ENCODE measurements at regions of chr7 and their contacts with region 1.

Region 1: DNA sequence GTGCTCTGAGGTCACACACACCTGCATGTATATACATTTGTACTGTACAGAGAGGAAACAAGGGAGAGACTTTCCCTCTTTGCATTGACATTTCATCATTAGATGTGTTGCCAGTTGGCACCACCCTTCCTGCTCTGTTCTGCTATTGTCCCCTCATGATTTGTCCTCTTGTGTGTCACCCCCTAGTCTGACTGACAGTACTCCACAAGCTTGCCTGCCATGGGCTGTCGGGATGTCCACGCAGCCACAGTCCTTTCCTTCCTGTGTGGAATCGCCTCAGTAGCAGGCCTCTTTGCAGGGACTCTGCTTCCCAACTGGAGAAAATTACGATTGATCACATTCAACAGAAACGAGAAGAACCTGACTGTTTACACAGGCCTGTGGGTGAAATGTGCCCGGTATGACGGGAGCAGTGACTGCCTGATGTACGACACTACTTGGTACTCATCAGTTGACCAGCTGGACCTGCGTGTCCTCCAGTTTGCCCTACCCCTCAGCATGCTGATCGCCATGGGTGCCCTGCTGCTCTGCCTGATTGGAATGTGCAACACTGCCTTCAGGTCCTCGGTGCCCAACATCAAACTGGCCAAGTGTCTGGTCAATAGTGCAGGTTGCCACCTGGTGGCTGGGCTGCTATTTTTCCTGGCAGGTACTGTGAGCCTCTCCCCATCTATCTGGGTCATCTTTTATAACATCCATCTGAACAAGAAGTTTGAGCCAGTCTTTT is 9.4 kb downstream of the CLDN12 start:
- DNase-seq: peak; percentile 63
- ATAC-seq: peak; percentile 62
- H3K4me3 ChIP-seq: no peak overlapping the region
- H3K27ac ChIP-seq: no peak overlapping the region
- H3K4me1 ChIP-seq: peaks cover 11% of the 10 kb centered on the region
- H3K27me3 ChIP-seq: no peaks in the 10 kb centered on the region
- CTCF ChIP-seq: peak; percentile 76

Region 2: DNA sequence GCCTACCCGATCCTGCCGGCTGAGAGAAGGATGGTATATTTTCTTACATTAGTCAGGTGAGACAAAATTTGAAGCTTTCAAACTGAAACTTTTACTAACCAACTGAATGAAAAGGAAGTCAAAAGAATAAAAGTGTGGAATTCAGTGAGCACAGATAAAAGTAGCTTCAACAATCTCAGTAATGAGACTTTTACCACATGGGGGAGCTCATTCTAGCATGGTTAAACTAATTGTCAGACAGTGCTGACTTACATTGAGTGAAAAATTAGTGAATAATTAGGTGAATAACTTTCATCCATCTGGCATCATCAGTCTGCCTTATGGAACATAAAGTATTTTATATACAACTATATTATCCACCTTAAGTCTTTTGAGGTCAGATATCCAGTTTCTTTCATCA is 99.9 kb before region 1 on chr7:
- CTCF ChIA-PET with region 1: no interaction called
- POLR2A ChIA-PET with region 1: no interaction called
- intact Hi-C with region 1: loop called (anchors 1 kb)
- DNase-seq: peak; percentile 19
- ATAC-seq: peak; percentile 64
- H3K4me3 ChIP-seq: no peak overlapping the region
- H3K27ac ChIP-seq: no peak overlapping the region
- H3K4me1 ChIP-seq: 0 out of 2 replicates have a peak, but pooled peaks cover 3% of the 10 kb centered on the region
- H3K27me3 ChIP-seq: no peaks in the 10 kb centered on the region
- CTCF ChIP-seq: peak; percentile 54

Region 3: GRCh38 chr7:90383422-90383821 is 29.2 kb before region 1 on chr7:
- CTCF ChIA-PET with region 1: no interaction called
- POLR2A ChIA-PET with region 1: no interaction called
- intact Hi-C with region 1: loop called (anchors 1 kb)
- DNase-seq: peak; percentile 79
- ATAC-seq: peak; percentile 63
- H3K4me3 ChIP-seq: peak overlapping the region; percentile 36; the same call in 1 of the 2 replicates
- H3K27ac ChIP-seq: peak overlapping the region; percentile 83
- H3K4me1 ChIP-seq: peaks cover 52% of the 10 kb centered on the region
- H3K27me3 ChIP-seq: no peaks in the 10 kb centered on the region
- CTCF ChIP-seq: no peak